HCT116 (cell line): ENCODE measurements at regions of chr1 and their contacts with region 1.

Region 1: DNA sequence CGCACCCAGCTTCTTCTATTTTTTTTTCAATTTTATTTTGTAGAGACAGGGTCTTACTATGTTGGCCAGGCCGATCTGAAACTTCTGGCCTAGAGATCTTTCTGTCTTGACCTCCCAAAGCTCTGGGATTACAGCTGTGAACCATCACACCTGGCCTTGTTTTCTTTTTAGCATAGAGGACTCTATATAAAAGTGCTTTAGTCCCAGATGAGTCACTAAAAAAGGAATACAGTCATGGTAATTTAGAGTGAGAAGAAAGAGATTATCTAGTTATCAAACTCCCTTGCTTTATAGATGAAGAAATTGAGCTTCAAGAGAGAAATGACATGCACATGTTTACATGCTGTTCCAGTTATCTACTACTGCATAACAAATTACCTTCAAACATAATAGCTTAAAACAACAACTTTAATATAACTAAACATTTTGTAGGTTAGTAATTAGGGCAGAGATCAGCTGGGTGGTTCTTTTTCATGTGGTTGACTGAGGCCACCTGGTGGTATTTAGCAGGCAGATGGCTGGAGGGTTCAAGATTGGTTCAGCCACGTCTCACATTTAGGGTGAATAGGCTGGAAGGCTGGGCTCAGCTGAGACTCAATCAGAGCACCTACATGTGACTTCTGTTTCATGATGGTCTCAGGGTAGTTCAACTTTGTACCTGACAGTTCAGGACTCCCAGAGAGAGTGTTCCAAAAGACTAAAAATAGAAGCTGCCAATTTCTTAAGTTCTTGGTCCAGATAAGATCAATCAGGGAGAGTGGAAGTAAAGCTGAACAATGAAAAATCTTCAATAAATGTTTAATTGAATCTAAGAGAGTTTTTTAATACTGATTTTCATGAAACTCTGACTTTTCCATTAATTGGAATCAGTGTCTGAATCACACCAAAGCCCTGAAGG is 16.9 kb upstream of the MTF2 start:
- DNase-seq: peak; percentile 47
- ATAC-seq: peak; percentile 96
- H3K4me3 ChIP-seq: no peak overlapping the region
- H3K27ac ChIP-seq: no peak overlapping the region
- H3K4me1 ChIP-seq: peaks cover 0 to 8% of the 10 kb centered on the region in 2 experiments; a peak in 2 of 4 replicates
- H3K27me3 ChIP-seq: no peaks in the 10 kb centered on the region; the same call in 1 of the 2 replicates
- CTCF ChIP-seq: peak; percentile 65 to 84 (median 69)
- POLR2A ChIP-seq: no peak
- RAD21 ChIP-seq: peak; percentile 85

Region 2: GRCh38 chr1:92968138-92969032 is 93.8 kb before region 1 on chr1:
- CTCF ChIA-PET with region 1: interaction called, 8 read pairs
- POLR2A ChIA-PET with region 1: no interaction called
- RAD21 ChIA-PET with region 1: no interaction called
- intact Hi-C with region 1: loop called (anchors 5 kb)
- DNase-seq: peak; percentile 42
- ATAC-seq: peak; percentile 95
- H3K4me3 ChIP-seq: no peak overlapping the region
- H3K27ac ChIP-seq: no peak overlapping the region
- H3K4me1 ChIP-seq: peaks cover 0 to 4% of the 10 kb centered on the region in 2 experiments; a peak in 1 of 4 replicates
- H3K27me3 ChIP-seq: no peaks in the 10 kb centered on the region
- CTCF ChIP-seq: peak; percentile 72 to 83 (median 75); a peak in 5 of 6 replicates
- POLR2A ChIP-seq: no peak
- RAD21 ChIP-seq: peak; percentile 71

Region 3: GRCh38 chr1:93021539-93022134 is 40.5 kb before region 1 on chr1:
- CTCF ChIA-PET with region 1: interaction called, 14 read pairs
- POLR2A ChIA-PET with region 1: no interaction called
- RAD21 ChIA-PET with region 1: interaction called in 1 of 2 experiments, 3 read pairs
- intact Hi-C with region 1: loop called (anchors 1 kb)
- DNase-seq: peak; percentile 42
- ATAC-seq: peak; percentile 88
- H3K4me3 ChIP-seq: no peak overlapping the region
- H3K27ac ChIP-seq: no peak overlapping the region
- H3K4me1 ChIP-seq: no peaks in the 10 kb centered on the region; a peak in 1 of 4 replicates
- H3K27me3 ChIP-seq: no peaks in the 10 kb centered on the region
- CTCF ChIP-seq: peak; percentile 67 to 86 (median 71)
- POLR2A ChIP-seq: no peak
- RAD21 ChIP-seq: peak; percentile 76

Region 4: DNA sequence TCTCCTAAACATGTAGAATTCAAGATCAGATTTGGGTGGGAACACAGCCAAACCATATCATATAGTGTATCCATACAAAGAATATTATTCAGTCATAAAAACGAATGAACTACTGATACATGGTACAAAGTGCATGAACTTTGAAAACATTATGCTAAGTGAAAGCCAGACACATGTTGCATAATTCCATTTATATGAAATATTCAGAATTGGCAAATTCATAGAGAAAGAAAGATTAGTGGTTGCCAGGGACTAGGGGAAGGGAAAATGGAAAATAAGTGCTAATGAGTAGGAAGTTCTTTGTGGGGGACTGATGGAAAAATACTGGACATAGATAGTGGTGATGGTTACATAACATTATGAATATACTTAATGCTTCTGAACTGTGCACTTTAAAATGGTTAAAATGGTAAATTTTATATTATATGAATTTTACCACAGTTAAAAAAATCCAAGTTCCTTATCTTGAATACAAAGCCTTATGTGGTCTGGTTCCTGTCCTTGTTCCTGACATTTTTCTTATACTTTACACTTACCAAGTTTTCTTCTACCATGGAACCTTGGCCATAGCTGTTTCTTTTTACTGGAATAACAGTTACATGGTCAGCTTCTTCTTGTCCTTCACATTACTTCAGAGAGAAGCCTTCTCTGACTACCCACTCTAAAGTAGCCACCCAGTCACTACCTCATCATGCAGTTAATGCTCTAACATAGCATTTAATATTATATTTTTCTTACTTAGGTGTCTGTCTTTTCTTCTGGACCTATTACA is 182.3 kb after region 1 on chr1:
- CTCF ChIA-PET with region 1: no interaction called
- POLR2A ChIA-PET with region 1: no interaction called
- RAD21 ChIA-PET with region 1: no interaction called
- intact Hi-C with region 1: no loop called
- DNase-seq: no peak
- ATAC-seq: no peak
- H3K4me3 ChIP-seq: no peak overlapping the region
- H3K27ac ChIP-seq: no peak overlapping the region
- H3K4me1 ChIP-seq: no peaks in the 10 kb centered on the region
- H3K27me3 ChIP-seq: no peaks in the 10 kb centered on the region
- CTCF ChIP-seq: no peak
- POLR2A ChIP-seq: no peak
- RAD21 ChIP-seq: no peak